ENCODE measurements at regions of chr4 and their contacts with region 1.

Region 1: DNA sequence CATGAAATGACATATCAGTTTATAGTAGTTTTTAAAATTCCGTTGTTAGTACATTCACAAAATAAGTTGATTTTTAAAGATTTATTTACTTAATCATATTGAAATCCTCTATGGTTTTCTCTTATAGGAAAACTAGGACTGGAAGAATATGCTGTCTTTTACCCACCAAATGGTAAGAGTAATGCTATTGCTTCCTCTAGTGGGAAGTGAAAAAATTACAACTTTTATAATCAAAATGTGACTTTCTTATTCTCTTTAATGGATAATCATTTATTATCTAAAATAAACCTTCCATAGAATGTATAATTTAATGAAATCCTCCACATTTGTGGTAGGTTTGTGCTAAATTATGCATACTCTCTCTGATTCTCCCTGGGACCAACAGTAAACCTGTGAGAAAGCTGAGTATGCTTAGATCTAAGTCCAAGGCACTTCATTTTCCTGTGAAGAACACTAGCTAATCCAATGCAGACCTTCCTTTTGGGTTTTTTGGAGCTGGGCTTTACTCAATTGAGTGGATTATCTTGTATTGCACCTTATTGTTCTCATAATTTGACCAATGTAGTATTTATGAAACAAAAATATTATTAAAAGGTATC is 136.2 kb downstream of the TBC1D19 start:
- DNase-seq: peak; percentile 63
- ATAC-seq: peak; percentile 60
- H3K4me3 ChIP-seq: no peak overlapping the region
- H3K27ac ChIP-seq: no peak overlapping the region
- H3K4me1 ChIP-seq: peaks cover 3% of the 10 kb centered on the region; the same call in 1 of the 2 replicates
- H3K27me3 ChIP-seq: no peaks in the 10 kb centered on the region
- CTCF ChIP-seq: peak; percentile 93
- POLR2A ChIP-seq: 0 out of 2 replicates have a peak, but pooled peaks have one; percentile 30
- RAD21 ChIP-seq: peak; percentile 92

Region 2: GRCh38 chr4:25986807-25987206 is 733.2 kb before region 1 on chr4:
- CTCF ChIA-PET with region 1: no interaction called
- POLR2A ChIA-PET with region 1: no interaction called
- dilution Hi-C with region 1: no loop called
- in situ Hi-C with region 1: loop called (anchors 10 kb)
- intact Hi-C with region 1: loop called (anchors 5 kb)
- DNase-seq: no peak
- ATAC-seq: no peak
- H3K4me3 ChIP-seq: no peak overlapping the region
- H3K27ac ChIP-seq: no peak overlapping the region
- H3K4me1 ChIP-seq: peaks cover 2% of the 10 kb centered on the region; the same call in 1 of the 2 replicates
- H3K27me3 ChIP-seq: peaks cover 5% of the 10 kb centered on the region
- CTCF ChIP-seq: no peak
- POLR2A ChIP-seq: no peak
- RAD21 ChIP-seq: no peak

Region 3: DNA sequence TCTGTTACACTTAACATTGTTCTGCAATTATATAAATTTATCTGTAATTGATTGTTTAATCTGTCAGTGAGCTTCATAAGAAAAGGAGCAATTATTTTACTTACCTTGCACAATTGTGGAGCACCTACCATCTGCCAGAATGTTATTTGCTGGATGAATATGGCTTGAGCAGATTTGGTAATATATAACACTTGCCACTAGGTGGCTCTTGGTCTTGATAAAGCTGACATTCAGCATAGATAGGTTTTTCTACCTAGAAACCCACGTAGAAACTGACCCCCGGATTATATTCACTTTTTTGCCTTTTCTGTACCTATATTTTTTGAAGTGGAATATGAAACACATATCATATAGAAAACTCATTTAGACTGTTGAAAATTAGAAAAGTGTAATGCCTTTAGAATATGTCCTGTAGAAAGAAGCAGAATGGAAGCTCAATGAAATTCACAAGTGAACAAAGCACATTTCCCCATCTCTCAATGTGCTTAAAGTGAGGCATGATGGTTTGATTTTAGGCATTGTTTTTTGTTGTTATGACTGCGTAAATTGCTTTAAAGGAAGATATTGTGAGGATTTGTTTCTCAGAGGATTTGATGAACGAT is 389.8 kb before region 1 on chr4:
- CTCF ChIA-PET with region 1: no interaction called
- POLR2A ChIA-PET with region 1: interaction called, 3 read pairs
- dilution Hi-C with region 1: no loop called
- in situ Hi-C with region 1: loop called (anchors 10 kb)
- intact Hi-C with region 1: loop called (anchors 2 kb)
- DNase-seq: peak; percentile 68
- ATAC-seq: no peak
- H3K4me3 ChIP-seq: no peak overlapping the region
- H3K27ac ChIP-seq: no peak overlapping the region
- H3K4me1 ChIP-seq: peaks cover 13% of the 10 kb centered on the region
- H3K27me3 ChIP-seq: no peaks in the 10 kb centered on the region
- CTCF ChIP-seq: peak; percentile 61
- POLR2A ChIP-seq: no peak
- RAD21 ChIP-seq: peak; percentile 67

Region 4: GRCh38 chr4:26424838-26425237 is 295.2 kb before region 1 on chr4:
- CTCF ChIA-PET with region 1: no interaction called
- POLR2A ChIA-PET with region 1: no interaction called
- dilution Hi-C with region 1: no loop called
- in situ Hi-C with region 1: loop called (anchors 10 kb)
- intact Hi-C with region 1: no loop called
- DNase-seq: no peak
- ATAC-seq: no peak
- H3K4me3 ChIP-seq: no peak overlapping the region
- H3K27ac ChIP-seq: no peak overlapping the region
- H3K4me1 ChIP-seq: peaks cover 5% of the 10 kb centered on the region
- H3K27me3 ChIP-seq: no peaks in the 10 kb centered on the region
- CTCF ChIP-seq: 0 out of 2 replicates have a peak, but pooled peaks have one; percentile 26
- POLR2A ChIP-seq: no peak
- RAD21 ChIP-seq: no peak

Region 5: DNA sequence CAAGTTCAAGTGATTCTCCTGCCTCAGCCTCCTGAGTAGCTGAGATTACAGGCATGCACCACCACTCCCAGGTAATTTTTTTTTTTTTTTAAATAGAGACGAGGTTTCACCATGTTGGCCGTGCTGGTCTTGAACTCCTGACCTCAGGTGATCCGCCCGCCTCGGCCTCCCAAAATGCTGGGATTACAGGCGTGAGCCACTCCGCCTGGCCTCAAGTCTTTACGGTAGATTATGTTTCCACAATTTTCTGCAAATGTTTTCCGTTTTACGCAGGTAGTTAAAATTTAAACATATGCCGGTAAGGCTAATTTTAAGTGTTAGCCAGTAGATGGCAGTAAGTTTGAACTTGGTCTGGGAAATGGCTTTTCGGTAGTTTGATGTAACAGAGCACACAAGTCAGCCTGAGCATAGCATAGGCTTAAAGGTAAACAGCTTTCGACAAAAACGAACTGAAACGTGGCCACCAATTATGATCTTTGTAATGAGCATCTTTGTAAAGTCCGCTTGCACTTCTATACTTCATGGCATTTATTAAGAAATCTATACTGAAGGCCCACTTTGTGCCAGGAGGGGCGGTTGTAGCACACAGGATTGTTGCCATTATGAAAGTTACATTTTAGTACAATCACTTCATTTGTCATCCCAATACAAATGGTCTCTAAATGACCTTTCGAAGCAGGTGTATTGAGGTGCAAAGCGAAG is 260.8 kb before region 1 on chr4:
- CTCF ChIA-PET with region 1: interaction called, 8 read pairs
- POLR2A ChIA-PET with region 1: no interaction called
- dilution Hi-C with region 1: no loop called
- in situ Hi-C with region 1: loop called (anchors 10 kb)
- intact Hi-C with region 1: loop called (anchors 1 kb)
- DNase-seq: peak; percentile 86
- ATAC-seq: peak; percentile 53
- H3K4me3 ChIP-seq: no peak overlapping the region
- H3K27ac ChIP-seq: peak overlapping the region; percentile 82; the same call in 1 of the 2 replicates
- H3K4me1 ChIP-seq: peaks cover 22% of the 10 kb centered on the region
- H3K27me3 ChIP-seq: no peaks in the 10 kb centered on the region
- CTCF ChIP-seq: peak; percentile 65
- POLR2A ChIP-seq: no peak
- RAD21 ChIP-seq: peak; percentile 73

Measured in IMR-90 (cell line).